ENCODE measurements at regions of chr10 and their contacts with region 1.

Region 1: DNA sequence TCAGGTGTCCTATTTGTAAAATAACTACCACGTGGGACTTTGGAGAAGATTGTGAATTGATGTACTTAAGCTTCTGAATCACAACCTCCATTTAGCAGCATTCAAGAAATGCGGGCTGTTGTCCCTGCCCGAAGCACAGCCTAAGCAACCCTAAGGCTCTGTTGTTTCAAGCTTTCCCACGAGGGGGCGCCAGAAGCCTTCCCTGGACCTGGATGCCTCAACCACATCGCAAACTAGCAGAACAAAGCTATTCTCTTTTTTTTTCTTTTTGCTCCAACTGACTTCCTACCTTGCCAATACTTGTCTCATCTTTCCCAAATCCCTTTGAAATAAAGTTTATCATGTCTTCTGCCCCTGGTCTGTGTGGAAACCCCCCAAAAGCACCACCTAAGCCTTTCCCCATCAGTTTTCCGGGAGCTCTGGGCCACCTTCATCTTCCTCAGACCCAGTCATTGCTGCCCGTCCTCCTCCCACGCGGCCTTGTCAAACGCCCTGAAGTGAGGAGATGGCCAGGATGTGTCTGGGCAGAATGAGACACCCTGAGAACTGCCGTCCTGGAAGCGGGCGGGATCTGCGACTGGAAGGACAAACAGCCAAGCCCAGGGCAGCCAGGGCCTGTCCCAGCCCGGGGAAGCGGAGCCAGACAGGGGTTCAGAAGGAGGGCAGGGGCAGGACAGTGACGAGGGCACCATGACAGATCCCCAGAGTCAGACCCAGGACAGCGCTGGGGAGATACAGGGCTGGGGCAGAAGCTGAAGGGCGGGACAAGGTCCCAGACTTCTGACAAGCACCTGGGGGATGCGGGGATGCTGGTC is 112.7 kb downstream of the SLIT1 start:
- DNase-seq: peak; percentile 42 to 56 (median 50)
- H3K4me3 ChIP-seq: no peak overlapping the region
- H3K4me3 Mint-ChIP-seq: no peak overlapping the region
- H3K27ac ChIP-seq: no peak overlapping the region
- H3K27ac Mint-ChIP-seq: no peak overlapping the region
- H3K4me1 ChIP-seq: no peaks in the 10 kb centered on the region
- H3K4me1 Mint-ChIP-seq: no peaks in the 10 kb centered on the region
- H3K27me3 ChIP-seq: no peaks in the 10 kb centered on the region
- H3K27me3 Mint-ChIP-seq: peaks cover 7 to 15% (median 10%) of the 10 kb centered on the region in 3 donors
- CTCF ChIP-seq: peak; percentile 93

Region 2: GRCh38 chr10:96991313-96991841 is 81.7 kb before region 1 on chr10:
- intact Hi-C with region 1: no loop called
- DNase-seq: no peak
- H3K4me3 ChIP-seq: no peak overlapping the region
- H3K4me3 Mint-ChIP-seq: no peak overlapping the region
- H3K27ac ChIP-seq: no peak overlapping the region
- H3K27ac Mint-ChIP-seq: peak overlapping the region in 1 of 7 donors; percentile 7
- H3K4me1 ChIP-seq: no peaks in the 10 kb centered on the region
- H3K4me1 Mint-ChIP-seq: no peaks in the 10 kb centered on the region
- H3K27me3 ChIP-seq: no peaks in the 10 kb centered on the region
- H3K27me3 Mint-ChIP-seq: peaks cover 0 to 2% (median 0%) of the 10 kb centered on the region in 3 donors
- CTCF ChIP-seq: no peak

Region 3: DNA sequence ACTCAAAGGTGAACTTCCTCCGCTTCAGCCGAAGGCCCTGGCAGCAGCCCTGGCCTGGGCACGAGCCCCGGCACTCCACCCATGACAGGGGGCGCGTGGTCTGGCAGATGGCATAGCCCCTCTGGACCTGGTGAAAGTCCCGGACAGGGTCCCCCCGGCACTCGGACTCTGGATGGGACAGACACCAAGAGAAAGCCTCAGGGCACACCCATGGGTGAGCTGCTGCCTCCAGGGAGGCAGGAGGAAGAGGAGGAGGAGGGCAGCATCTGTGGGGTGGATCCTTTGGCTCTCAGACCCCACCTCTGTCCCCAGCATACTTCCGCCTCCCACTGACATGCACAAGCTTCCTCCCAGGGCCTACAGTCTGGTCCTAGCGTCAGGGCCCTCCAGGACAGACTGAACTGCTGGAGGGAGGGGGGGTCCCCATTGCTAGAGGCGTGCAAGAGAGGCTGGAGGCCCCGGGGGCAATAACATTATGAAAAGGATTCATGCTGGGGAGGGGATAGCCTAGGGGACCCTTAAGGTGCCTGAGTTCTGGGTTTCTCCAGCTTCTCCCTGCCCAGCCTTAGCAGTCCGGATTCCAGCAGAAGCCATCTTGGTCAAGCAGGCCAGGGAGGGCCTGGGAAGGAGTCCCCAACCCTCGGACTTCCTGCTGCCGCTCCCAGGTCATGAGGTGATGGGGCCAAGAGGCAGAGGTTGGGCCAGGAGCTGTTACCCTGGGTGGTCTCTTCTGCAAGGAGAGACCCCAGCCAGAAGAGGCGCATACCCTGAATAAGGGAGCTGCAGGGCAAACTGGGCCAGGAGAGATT is 71.7 kb before region 1 on chr10:
- intact Hi-C with region 1: no loop called
- DNase-seq: no peak
- H3K4me3 ChIP-seq: no peak overlapping the region
- H3K4me3 Mint-ChIP-seq: no peak overlapping the region
- H3K27ac ChIP-seq: no peak overlapping the region
- H3K27ac Mint-ChIP-seq: no peak overlapping the region
- H3K4me1 ChIP-seq: no peaks in the 10 kb centered on the region
- H3K4me1 Mint-ChIP-seq: no peaks in the 10 kb centered on the region
- H3K27me3 ChIP-seq: no peaks in the 10 kb centered on the region
- H3K27me3 Mint-ChIP-seq: peaks cover 0 to 8% (median 4%) of the 10 kb centered on the region in 3 donors
- CTCF ChIP-seq: no peak

Region 4: DNA sequence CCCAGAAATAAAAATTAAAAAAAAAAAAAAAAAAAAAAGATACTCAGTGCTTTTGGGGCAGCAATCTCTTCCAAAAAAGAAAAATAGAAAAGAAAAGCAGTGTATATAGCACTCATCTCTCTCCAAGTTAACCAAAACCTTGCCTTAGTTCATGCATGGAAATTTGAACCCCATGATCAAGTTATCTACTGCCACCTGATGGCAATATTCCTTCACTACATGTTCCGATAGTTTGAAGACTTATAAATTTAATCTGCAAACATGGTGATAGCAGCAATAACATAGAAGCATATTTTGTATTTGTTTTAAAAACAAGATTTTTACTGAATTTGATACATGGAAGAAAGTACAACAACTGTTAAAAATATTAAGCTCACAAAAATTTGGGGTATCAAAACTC is 161.3 kb after region 1 on chr10:
- intact Hi-C with region 1: loop called in 1 of 2 experiments (anchors 2 kb)
- DNase-seq: peak in 2 of 3 donors; percentile 18 to 37
- H3K4me3 ChIP-seq: no peak overlapping the region
- H3K4me3 Mint-ChIP-seq: no peak overlapping the region
- H3K27ac ChIP-seq: no peak overlapping the region
- H3K27ac Mint-ChIP-seq: no peak overlapping the region
- H3K4me1 ChIP-seq: no peaks in the 10 kb centered on the region
- H3K4me1 Mint-ChIP-seq: no peaks in the 10 kb centered on the region
- H3K27me3 ChIP-seq: no peaks in the 10 kb centered on the region
- H3K27me3 Mint-ChIP-seq: no peaks in the 10 kb centered on the region
- CTCF ChIP-seq: peak; percentile 74

Region 5: DNA sequence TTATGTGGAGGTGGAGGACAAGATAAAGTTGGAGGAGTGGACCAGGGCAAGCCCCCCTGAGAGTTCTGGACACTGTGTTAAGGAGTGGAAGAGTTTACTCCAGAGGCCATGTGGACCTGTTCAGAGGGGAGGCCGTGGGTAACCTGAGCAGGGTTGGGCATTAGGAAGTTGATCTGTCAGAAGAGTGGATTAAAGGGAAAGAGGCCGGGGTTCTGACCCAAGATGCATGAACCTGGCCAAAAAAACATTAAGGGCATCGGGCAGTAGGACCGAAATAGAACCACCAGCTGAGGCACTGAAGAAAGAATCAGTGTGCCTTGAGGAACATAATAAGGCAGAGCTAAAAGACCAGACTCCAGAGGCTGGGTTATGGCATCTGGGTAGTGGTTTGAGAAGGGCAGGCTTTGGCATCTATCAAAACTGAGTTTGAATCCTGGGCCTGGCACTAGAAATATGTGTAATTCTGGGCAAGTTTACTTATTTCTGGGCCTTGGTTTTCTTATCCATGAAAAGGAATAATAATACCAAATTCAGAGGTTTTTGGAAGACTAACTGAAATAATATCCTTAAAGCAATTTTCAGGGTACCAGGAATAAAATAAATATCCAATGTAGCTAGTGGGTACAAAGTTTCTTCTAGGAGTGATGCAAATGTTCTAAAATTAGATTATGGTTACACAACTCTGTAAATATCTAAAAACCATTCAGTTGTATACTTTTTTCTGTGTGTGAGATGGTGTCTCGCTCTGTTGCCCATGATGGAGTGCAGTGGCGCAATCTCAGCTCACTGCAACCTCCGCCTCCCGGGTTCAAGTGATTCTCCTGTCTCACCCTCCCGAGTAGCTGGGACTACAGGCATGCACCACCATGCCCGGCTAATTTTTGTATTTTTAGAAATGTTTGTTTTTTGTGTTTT is 235.1 kb after region 1 on chr10:
- intact Hi-C with region 1: no loop called
- DNase-seq: no peak
- H3K4me3 ChIP-seq: no peak overlapping the region
- H3K4me3 Mint-ChIP-seq: no peak overlapping the region
- H3K27ac ChIP-seq: peak overlapping the region in 1 of 2 donors; percentile 6
- H3K27ac Mint-ChIP-seq: peak overlapping the region; percentile 30 to 95 (median 84)
- H3K4me1 ChIP-seq: peaks cover 17 to 18% of the 10 kb centered on the region in 2 donors
- H3K4me1 Mint-ChIP-seq: peaks cover 22% of the 10 kb centered on the region
- H3K27me3 ChIP-seq: no peaks in the 10 kb centered on the region
- H3K27me3 Mint-ChIP-seq: no peaks in the 10 kb centered on the region
- CTCF ChIP-seq: no peak

Measured in CD14-positive monocyte (primary cell).